T-cell (primary cell): ENCODE measurements at regions of chr7 and their contacts with region 1.

Region 1: GRCh38 chr7:117019287-117019686 is 66.0 kb downstream of the ST7 start:
- DNase-seq: no peak
- ATAC-seq: no peak
- H3K4me3 ChIP-seq: no peak overlapping the region
- H3K4me3 Mint-ChIP-seq: no peak overlapping the region
- H3K27ac ChIP-seq: no peak overlapping the region
- H3K27ac Mint-ChIP-seq: no peak overlapping the region
- H3K4me1 ChIP-seq: peaks cover 0 to 9% of the 10 kb centered on the region in 2 experiments
- H3K4me1 Mint-ChIP-seq: peaks cover 10 to 31% (median 25%) of the 10 kb centered on the region in 3 donors
- H3K27me3 ChIP-seq: no peaks in the 10 kb centered on the region
- H3K27me3 Mint-ChIP-seq: no peaks in the 10 kb centered on the region

Region 2: DNA sequence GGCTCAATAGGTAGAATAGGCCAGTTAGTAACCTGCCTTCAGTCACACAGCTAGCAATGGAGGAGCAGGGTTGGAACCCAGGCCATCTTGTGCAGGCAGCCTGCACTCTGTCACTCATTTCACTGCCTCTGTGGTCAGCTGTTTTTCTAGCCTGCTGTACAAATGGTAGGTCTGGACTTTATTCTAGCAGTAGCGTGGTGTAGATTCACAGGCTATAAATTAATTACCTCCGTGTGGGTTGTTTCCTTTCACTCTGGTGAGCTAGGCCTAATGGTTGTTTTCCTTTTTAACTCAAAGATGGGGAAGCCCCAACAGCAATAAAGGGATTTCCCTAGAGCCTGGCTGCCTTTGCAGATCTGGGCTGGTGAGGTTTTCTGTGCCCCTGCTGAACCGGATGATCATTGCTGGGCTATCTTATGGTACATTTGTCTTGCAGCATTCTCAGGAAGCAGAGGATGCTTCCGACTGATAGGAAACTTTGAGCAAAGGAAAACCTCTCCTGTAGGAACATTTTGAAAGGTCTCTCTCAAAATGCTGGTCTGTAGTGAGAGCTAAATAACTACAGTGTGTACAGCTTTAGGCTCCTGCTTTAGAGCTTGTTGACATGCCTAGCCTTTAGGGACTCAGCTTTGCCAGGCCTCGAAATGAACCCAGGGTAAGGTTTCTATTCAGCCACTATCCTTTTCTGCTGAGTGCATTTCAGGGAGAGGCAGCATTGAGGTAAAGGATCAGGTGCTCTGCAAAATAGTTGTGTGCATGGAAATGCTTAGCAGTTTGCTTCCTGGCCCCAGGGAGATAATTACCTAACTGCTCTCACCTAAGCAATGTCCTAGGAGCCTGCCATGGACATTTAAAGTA is 91.4 kb after region 1 on chr7:
- CTCF ChIA-PET with region 1: no interaction called
- POLR2A ChIA-PET with region 1: interaction called in 1 of 2 experiments, 17 read pairs
- DNase-seq: peak in 32 of 35 experiments; percentile 9 to 74 (median 32)
- ATAC-seq: peak; percentile 94 to 99 (median 98)
- H3K4me3 ChIP-seq: no peak overlapping the region
- H3K4me3 Mint-ChIP-seq: peak overlapping the region in 2 of 3 donors; percentile 22 to 28
- H3K27ac ChIP-seq: peak overlapping the region; percentile 14
- H3K27ac Mint-ChIP-seq: peak overlapping the region; percentile 71 to 75
- H3K4me1 ChIP-seq: peaks cover 9 to 13% of the 10 kb centered on the region in 2 experiments
- H3K4me1 Mint-ChIP-seq: peaks cover 11 to 26% (median 17%) of the 10 kb centered on the region in 3 donors
- H3K27me3 ChIP-seq: no peaks in the 10 kb centered on the region
- H3K27me3 Mint-ChIP-seq: no peaks in the 10 kb centered on the region

Region 3: DNA sequence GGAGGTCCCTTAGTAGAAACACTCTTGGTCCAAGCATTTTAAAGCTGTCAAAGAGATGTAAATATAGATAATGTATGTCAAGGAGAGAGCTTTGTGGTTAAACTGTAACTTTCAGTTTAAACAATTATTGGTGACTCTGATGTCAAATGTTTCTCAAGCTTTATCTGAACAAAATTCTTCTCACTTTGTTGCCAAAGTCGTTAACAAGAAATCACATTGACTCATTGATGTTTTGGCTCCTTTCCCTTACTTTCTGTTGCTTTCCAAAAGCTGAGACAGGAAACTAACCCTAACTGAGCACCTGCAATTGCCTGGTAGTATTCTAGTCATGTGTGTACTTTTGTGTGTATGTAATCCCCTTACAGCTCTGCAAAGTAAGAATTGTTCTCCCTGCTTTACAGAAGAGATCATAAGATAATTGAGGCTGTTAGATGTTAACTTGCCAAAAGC is 569.1 kb after region 1 on chr7:
- CTCF ChIA-PET with region 1: no interaction called
- POLR2A ChIA-PET with region 1: no interaction called
- DNase-seq: no peak
- ATAC-seq: no peak
- H3K4me3 ChIP-seq: no peak overlapping the region
- H3K4me3 Mint-ChIP-seq: no peak overlapping the region
- H3K27ac ChIP-seq: no peak overlapping the region
- H3K27ac Mint-ChIP-seq: no peak overlapping the region
- H3K4me1 ChIP-seq: no peaks in the 10 kb centered on the region
- H3K4me1 Mint-ChIP-seq: no peaks in the 10 kb centered on the region
- H3K27me3 ChIP-seq: no peaks in the 10 kb centered on the region
- H3K27me3 Mint-ChIP-seq: no peaks in the 10 kb centered on the region

Region 4: GRCh38 chr7:118072893-118073674 is 1053.8 kb after region 1 on chr7:
- CTCF ChIA-PET with region 1: no interaction called
- POLR2A ChIA-PET with region 1: no interaction called
- DNase-seq: no peak
- ATAC-seq: no peak
- H3K4me3 ChIP-seq: no peak overlapping the region
- H3K4me3 Mint-ChIP-seq: no peak overlapping the region
- H3K27ac ChIP-seq: no peak overlapping the region
- H3K27ac Mint-ChIP-seq: no peak overlapping the region
- H3K4me1 ChIP-seq: no peaks in the 10 kb centered on the region
- H3K4me1 Mint-ChIP-seq: no peaks in the 10 kb centered on the region
- H3K27me3 ChIP-seq: no peaks in the 10 kb centered on the region
- H3K27me3 Mint-ChIP-seq: peaks cover 7 to 14% of the 10 kb centered on the region in 2 donors